CD8-positive, alpha-beta T cell (primary cell): ENCODE measurements at regions of chr17 and their contacts with region 1.

Region 1: GRCh38 chr17:27601069-27601975 is 29.7 kb upstream of the LGALS9 start:
- DNase-seq: peak; percentile 67 to 89 (median 81)
- ATAC-seq: peak; percentile 70
- H3K4me3 ChIP-seq: no peak overlapping the region
- H3K4me3 Mint-ChIP-seq: no peak overlapping the region
- H3K27ac ChIP-seq: no peak overlapping the region
- H3K27ac Mint-ChIP-seq: no peak overlapping the region
- H3K4me1 ChIP-seq: no peaks in the 10 kb centered on the region
- H3K4me1 Mint-ChIP-seq: peaks cover 7% of the 10 kb centered on the region
- H3K27me3 ChIP-seq: no peaks in the 10 kb centered on the region
- H3K27me3 Mint-ChIP-seq: no peaks in the 10 kb centered on the region
- CTCF ChIP-seq: peak; percentile 90

Region 2: GRCh38 chr17:27236717-27237315 is 364.5 kb before region 1 on chr17:
- CTCF ChIA-PET with region 1: interaction called, 222 read pairs
- POLR2A ChIA-PET with region 1: interaction called, 3 read pairs
- intact Hi-C with region 1: loop called (anchors 1 kb)
- DNase-seq: peak; percentile 55 to 83 (median 75)
- ATAC-seq: peak; percentile 92
- H3K4me3 ChIP-seq: no peak overlapping the region
- H3K4me3 Mint-ChIP-seq: no peak overlapping the region
- H3K27ac ChIP-seq: no peak overlapping the region
- H3K27ac Mint-ChIP-seq: no peak overlapping the region
- H3K4me1 ChIP-seq: no peaks in the 10 kb centered on the region
- H3K4me1 Mint-ChIP-seq: no peaks in the 10 kb centered on the region
- H3K27me3 ChIP-seq: no peaks in the 10 kb centered on the region
- H3K27me3 Mint-ChIP-seq: peaks cover 3% of the 10 kb centered on the region
- CTCF ChIP-seq: peak; percentile 94

Region 3: GRCh38 chr17:27332485-27333409 is 268.6 kb before region 1 on chr17:
- CTCF ChIA-PET with region 1: interaction called, 24 read pairs
- POLR2A ChIA-PET with region 1: no interaction called
- intact Hi-C with region 1: loop called in 1 of 2 experiments (anchors 5 kb)
- DNase-seq: peak; percentile 76 to 93 (median 91)
- ATAC-seq: peak; percentile 80
- H3K4me3 ChIP-seq: peak overlapping the region; percentile 52 to 58
- H3K4me3 Mint-ChIP-seq: peak overlapping the region; percentile 79
- H3K27ac ChIP-seq: peak overlapping the region; percentile 21 to 84
- H3K27ac Mint-ChIP-seq: peak overlapping the region; percentile 88
- H3K4me1 ChIP-seq: peaks cover 13% of the 10 kb centered on the region
- H3K4me1 Mint-ChIP-seq: peaks cover 16% of the 10 kb centered on the region
- H3K27me3 ChIP-seq: no peaks in the 10 kb centered on the region
- H3K27me3 Mint-ChIP-seq: no peaks in the 10 kb centered on the region
- CTCF ChIP-seq: peak; percentile 54

Region 4: DNA sequence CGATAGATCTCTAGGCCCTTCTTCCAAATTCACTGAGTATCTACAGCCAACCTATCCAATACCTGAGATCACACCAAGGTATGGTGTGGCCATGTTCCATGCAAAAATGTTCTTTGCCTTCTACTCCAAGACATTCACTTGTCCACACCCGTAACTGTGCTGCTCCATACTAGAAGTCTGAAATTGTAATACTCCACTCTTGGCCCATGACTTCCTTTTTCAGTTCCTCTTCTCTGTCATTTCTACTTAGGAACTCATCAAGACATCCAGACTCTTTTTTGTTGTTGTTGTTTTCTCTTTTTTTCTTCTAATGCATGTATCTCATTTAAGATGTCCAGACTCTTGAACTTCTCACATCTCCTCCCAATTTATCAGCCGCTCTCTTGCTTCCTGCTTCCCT is 187.5 kb before region 1 on chr17:
- CTCF ChIA-PET with region 1: interaction called, 4 read pairs
- POLR2A ChIA-PET with region 1: no interaction called
- intact Hi-C with region 1: loop called in 1 of 2 experiments (anchors 2 kb)
- DNase-seq: no peak
- ATAC-seq: no peak
- H3K4me3 ChIP-seq: no peak overlapping the region
- H3K4me3 Mint-ChIP-seq: no peak overlapping the region
- H3K27ac ChIP-seq: no peak overlapping the region
- H3K27ac Mint-ChIP-seq: no peak overlapping the region
- H3K4me1 ChIP-seq: no peaks in the 10 kb centered on the region
- H3K4me1 Mint-ChIP-seq: no peaks in the 10 kb centered on the region
- H3K27me3 ChIP-seq: no peaks in the 10 kb centered on the region
- H3K27me3 Mint-ChIP-seq: no peaks in the 10 kb centered on the region
- CTCF ChIP-seq: no peak

Region 5: DNA sequence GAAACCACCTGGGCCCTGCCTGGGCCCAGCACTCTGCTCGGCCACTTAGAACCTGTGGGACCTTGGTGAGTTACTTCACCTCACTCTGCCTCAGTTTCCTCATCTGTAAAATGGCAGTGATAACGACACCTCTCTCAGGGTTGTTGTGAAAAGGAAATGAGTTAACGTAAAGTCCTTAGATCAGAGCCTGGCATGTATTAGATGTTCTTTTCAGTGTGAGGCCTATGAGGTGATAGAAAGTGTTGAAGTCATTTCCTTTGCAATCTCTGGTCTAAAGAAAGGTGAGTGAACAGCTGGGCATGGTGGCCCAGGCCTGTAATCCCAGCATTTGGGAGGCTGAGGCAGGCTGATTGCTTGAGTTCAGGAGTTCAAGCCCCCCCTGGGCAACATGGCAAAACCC is 22.0 kb before region 1 on chr17:
- CTCF ChIA-PET with region 1: interaction called, 17 read pairs
- POLR2A ChIA-PET with region 1: no interaction called
- intact Hi-C with region 1: no loop called
- DNase-seq: no peak
- ATAC-seq: no peak
- H3K4me3 ChIP-seq: no peak overlapping the region
- H3K4me3 Mint-ChIP-seq: no peak overlapping the region
- H3K27ac ChIP-seq: no peak overlapping the region
- H3K27ac Mint-ChIP-seq: no peak overlapping the region
- H3K4me1 ChIP-seq: no peaks in the 10 kb centered on the region
- H3K4me1 Mint-ChIP-seq: peaks cover 5% of the 10 kb centered on the region
- H3K27me3 ChIP-seq: no peaks in the 10 kb centered on the region
- H3K27me3 Mint-ChIP-seq: no peaks in the 10 kb centered on the region
- CTCF ChIP-seq: no peak

Region 6: DNA sequence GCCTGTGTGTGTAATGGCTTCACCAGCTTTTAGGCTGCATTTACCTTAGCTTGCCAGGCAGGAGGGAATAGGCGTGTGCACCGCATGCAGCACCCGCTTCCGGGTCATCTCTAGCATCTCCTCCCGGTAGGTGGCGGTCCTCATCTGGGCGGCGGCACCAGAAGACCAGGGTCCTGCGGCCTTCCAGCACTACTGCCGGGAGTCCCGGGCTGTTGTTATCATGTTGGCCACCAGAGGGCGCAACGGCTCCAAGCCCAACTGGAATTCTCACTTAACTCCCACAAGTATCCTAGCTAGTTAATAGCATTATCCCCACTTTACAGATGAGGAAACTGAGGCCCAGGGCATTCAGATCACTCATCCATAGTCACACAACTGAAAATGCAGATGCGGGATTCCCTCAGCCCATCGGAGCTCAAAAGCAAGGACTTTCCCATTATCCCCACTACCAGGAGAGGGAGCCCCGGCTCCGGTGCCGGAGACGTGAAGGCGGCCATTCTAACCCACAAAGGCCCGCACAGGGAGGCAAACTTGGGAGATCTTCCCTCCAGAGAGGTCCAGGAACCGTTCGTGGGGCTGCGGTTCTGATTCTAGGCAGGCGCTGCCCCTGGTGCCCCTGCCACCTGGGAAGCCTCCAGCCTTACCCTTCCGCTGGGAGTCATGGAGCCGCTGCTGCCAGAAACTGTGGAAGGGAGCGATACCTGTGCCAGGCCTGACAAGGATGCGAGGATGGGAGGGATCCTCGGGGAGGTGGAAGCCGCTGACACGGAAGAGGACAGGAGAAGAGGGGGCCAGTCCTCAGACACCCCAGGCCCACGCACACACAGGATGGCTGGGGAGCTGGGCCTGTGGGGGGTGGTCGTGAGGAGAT is 53.6 kb after region 1 on chr17:
- CTCF ChIA-PET with region 1: interaction called, 181 read pairs
- POLR2A ChIA-PET with region 1: interaction called, 3 read pairs
- intact Hi-C with region 1: loop called (anchors 1 to 2 kb)
- DNase-seq: peak; percentile 28 to 79 (median 59)
- ATAC-seq: peak; percentile 62
- H3K4me3 ChIP-seq: no peak overlapping the region
- H3K4me3 Mint-ChIP-seq: no peak overlapping the region
- H3K27ac ChIP-seq: no peak overlapping the region
- H3K27ac Mint-ChIP-seq: no peak overlapping the region
- H3K4me1 ChIP-seq: no peaks in the 10 kb centered on the region
- H3K4me1 Mint-ChIP-seq: no peaks in the 10 kb centered on the region
- H3K27me3 ChIP-seq: no peaks in the 10 kb centered on the region
- H3K27me3 Mint-ChIP-seq: peaks cover 3% of the 10 kb centered on the region
- CTCF ChIP-seq: peak; percentile 94

Region 7: DNA sequence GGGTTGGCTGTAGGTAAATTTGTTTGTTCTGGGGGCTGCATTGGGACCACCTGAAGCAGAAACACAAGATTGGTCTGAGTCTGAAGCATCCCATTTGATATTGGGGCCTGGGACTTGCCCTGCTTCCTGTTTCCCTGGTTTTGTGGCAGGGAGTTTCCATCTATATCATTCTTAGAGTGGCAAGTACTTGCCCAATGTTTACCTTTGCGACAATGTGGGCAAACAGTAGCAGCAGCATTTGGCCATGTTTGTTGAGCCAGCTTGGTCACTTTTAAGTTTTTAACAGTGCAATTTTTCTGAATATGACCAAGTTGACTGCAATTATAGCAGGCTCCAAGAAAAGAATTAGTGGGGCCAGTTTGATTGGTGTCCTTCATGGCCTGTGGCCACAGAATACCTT is 91.4 kb after region 1 on chr17:
- CTCF ChIA-PET with region 1: no interaction called
- POLR2A ChIA-PET with region 1: no interaction called
- intact Hi-C with region 1: no loop called
- DNase-seq: no peak
- ATAC-seq: no peak
- H3K4me3 ChIP-seq: no peak overlapping the region
- H3K4me3 Mint-ChIP-seq: no peak overlapping the region
- H3K27ac ChIP-seq: no peak overlapping the region
- H3K27ac Mint-ChIP-seq: no peak overlapping the region
- H3K4me1 ChIP-seq: no peaks in the 10 kb centered on the region
- H3K4me1 Mint-ChIP-seq: no peaks in the 10 kb centered on the region
- H3K27me3 ChIP-seq: no peaks in the 10 kb centered on the region
- H3K27me3 Mint-ChIP-seq: peaks cover 8% of the 10 kb centered on the region
- CTCF ChIP-seq: no peak